ENCODE measurements at regions of chr6 and their contacts with region 1.

Region 1: DNA sequence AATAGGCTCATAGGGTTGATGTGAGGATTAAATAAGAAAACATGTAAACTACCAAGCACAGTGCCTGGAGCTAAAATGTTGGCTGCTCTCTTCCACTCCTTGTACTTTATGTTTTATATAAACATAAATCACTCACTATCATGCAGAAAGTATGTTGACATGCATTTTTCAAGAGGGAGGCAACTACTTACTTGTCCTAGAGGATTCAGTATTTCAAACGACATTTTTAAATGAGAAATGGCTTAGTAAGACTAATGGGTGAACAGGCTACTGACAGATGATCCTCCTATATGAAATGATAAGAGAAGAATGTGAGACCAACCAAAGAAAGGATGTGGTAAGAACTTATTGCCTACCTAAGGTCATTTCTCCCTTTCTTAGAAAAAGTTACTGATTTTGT is 21.0 kb downstream of the LATS1 start:
- DNase-seq: peak; percentile 21
- H3K4me3 Mint-ChIP-seq: no peak overlapping the region
- H3K27ac Mint-ChIP-seq: peak overlapping the region; percentile 87
- H3K4me1 Mint-ChIP-seq: peaks cover 14% of the 10 kb centered on the region
- H3K27me3 Mint-ChIP-seq: no peaks in the 10 kb centered on the region
- CTCF ChIP-seq: no peak

Region 2: GRCh38 chr6:149648148-149649145 is 48.5 kb before region 1 on chr6 and contains the start of gene KATNA1:
- CTCF ChIA-PET with region 1: no interaction called
- POLR2A ChIA-PET with region 1: interaction called, 19 read pairs
- intact Hi-C with region 1: no loop called
- DNase-seq: peak; percentile 93
- H3K4me3 Mint-ChIP-seq: peak within 1 kb of the TSS; percentile 85
- H3K27ac Mint-ChIP-seq: peak within 1 kb of the TSS; percentile 82
- H3K4me1 Mint-ChIP-seq: peaks cover 6% of the 10 kb centered on the region
- H3K27me3 Mint-ChIP-seq: no peaks in the 10 kb centered on the region
- CTCF ChIP-seq: no peak
- total RNA-seq, gene KATNA1: 23.2 and 25.8 TPM in 2 replicates

Region 3: DNA sequence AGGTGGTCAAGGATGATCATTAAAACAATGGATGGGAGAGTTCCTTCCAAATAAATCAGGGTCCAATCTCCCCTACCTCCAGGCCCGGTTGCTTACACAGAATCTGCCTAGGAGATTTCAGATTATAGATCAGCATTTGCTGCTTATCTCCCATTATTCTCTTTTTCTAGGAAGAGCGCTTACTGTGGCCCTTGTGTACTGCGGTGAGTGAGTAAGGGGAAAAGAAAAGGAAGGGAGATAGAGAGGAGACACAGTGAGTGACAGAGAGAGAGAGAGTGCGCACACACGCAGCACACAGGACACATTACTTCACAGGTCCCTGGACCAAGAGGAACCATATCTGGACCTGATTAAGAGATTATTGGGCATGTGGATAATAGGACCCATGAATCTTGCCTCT is 14.8 kb after region 1 on chr6:
- CTCF ChIA-PET with region 1: no interaction called
- POLR2A ChIA-PET with region 1: interaction called, 96 read pairs
- intact Hi-C with region 1: no loop called
- DNase-seq: no peak
- H3K4me3 Mint-ChIP-seq: no peak overlapping the region
- H3K27ac Mint-ChIP-seq: no peak overlapping the region
- H3K4me1 Mint-ChIP-seq: peaks cover 6% of the 10 kb centered on the region
- H3K27me3 Mint-ChIP-seq: no peaks in the 10 kb centered on the region
- CTCF ChIP-seq: no peak

Region 4: GRCh38 chr6:149834513-149835481 is 137.9 kb after region 1 on chr6:
- CTCF ChIA-PET with region 1: no interaction called
- POLR2A ChIA-PET with region 1: no interaction called
- intact Hi-C with region 1: no loop called
- DNase-seq: peak; percentile 80
- H3K4me3 Mint-ChIP-seq: no peak overlapping the region
- H3K27ac Mint-ChIP-seq: no peak overlapping the region
- H3K4me1 Mint-ChIP-seq: no peaks in the 10 kb centered on the region
- H3K27me3 Mint-ChIP-seq: no peaks in the 10 kb centered on the region
- CTCF ChIP-seq: peak; percentile 80

Measured in MCF 10A (cell line).